ENCODE measurements at regions of chr2 and their contacts with region 1.

Region 1: GRCh38 chr2:95231723-95232122 is 24.4 kb downstream of the ZNF892 start:
- DNase-seq: no peak
- ATAC-seq: no peak
- H3K4me3 ChIP-seq: no peak overlapping the region
- H3K27ac ChIP-seq: no peak overlapping the region
- H3K4me1 ChIP-seq: no peaks in the 10 kb centered on the region
- H3K27me3 ChIP-seq: no peaks in the 10 kb centered on the region
- CTCF ChIP-seq: peak in 1 of 5 experiments; percentile 16
- POLR2A ChIP-seq: no peak

Region 2: GRCh38 chr2:94970353-94970752 is 261.4 kb before region 1 on chr2:
- in situ Hi-C with region 1: no loop called
- intact Hi-C with region 1: no loop called
- DNase-seq: no peak
- ATAC-seq: no peak
- H3K4me3 ChIP-seq: no peak overlapping the region
- H3K27ac ChIP-seq: no peak overlapping the region
- H3K4me1 ChIP-seq: no peaks in the 10 kb centered on the region
- H3K27me3 ChIP-seq: peaks cover 0 to 25% (median 20%) of the 10 kb centered on the region in 3 donors
- CTCF ChIP-seq: no peak
- POLR2A ChIP-seq: no peak

Region 3: DNA sequence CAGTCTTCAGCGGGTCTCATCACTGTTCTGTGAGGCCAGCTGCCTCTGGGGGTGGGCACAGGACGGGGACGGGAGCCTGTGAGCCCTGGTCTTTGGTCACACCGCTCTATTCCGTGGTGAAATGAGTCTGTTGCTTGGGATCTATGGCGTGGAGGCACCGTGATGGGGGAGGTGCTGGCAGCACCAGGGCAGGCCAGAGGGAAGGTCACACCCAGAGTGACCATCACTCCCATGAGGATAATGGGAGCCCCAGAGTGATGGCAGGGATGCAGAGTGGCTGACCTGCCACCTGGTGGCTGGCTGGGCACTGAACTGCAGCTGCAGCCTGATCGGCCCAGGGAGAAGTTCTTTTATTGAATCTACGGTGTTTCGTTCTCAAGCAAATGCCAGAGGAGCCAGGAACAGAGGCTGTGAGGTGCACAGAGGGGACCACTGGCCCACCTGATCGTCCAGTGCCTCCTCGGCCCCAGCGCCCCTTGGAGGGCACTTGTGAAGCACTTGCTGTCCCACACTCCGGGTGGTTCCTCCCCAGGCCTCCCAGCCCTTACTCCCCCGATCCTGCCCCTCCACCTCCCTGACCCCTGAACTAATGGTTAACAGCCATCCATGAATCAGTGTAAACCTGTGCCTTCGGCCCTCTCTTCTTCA is 83.4 kb after region 1 on chr2:
- in situ Hi-C with region 1: no loop called
- intact Hi-C with region 1: loop called (anchors 2 kb)
- DNase-seq: no peak
- ATAC-seq: peak in 1 of 2 donors; percentile 33
- H3K4me3 ChIP-seq: no peak overlapping the region
- H3K27ac ChIP-seq: no peak overlapping the region
- H3K4me1 ChIP-seq: no peaks in the 10 kb centered on the region
- H3K27me3 ChIP-seq: peaks cover 0 to 5% (median 0%) of the 10 kb centered on the region in 3 donors
- CTCF ChIP-seq: peak in 4 of 5 experiments; percentile 27 to 39 (median 32)
- POLR2A ChIP-seq: no peak

Measured in gastrocnemius medialis (tissue), 4 donors.